Naive thymus-derived CD4-positive, alpha-beta T cell (primary cell): ENCODE measurements at regions of chr15 and their contacts with region 1.

Region 1: GRCh38 chr15:41695750-41696426 is 35.7 kb downstream of the MGA start:
- DNase-seq: peak in 7 of 9 donors; percentile 22 to 56 (median 44)
- ATAC-seq: peak; percentile 97
- H3K4me3 ChIP-seq: no peak overlapping the region
- H3K4me3 Mint-ChIP-seq: peak overlapping the region; percentile 3 to 69 (median 56)
- H3K27ac ChIP-seq: peak overlapping the region; percentile 42
- H3K27ac Mint-ChIP-seq: peak overlapping the region; percentile 22 to 81 (median 67)
- H3K4me1 ChIP-seq: peaks cover 0 to 10% of the 10 kb centered on the region in 2 donors
- H3K4me1 Mint-ChIP-seq: peaks cover 25 to 74% (median 59%) of the 10 kb centered on the region in 7 donors
- H3K27me3 ChIP-seq: no peaks in the 10 kb centered on the region
- H3K27me3 Mint-ChIP-seq: no peaks in the 10 kb centered on the region

Region 2: GRCh38 chr15:41811432-41812195 is 115.7 kb after region 1 on chr15:
- CTCF ChIA-PET with region 1: interaction called, 5 read pairs
- POLR2A ChIA-PET with region 1: no interaction called
- intact Hi-C with region 1: loop called (anchors 1 kb)
- DNase-seq: peak; percentile 58 to 77 (median 72)
- ATAC-seq: peak; percentile 95
- H3K4me3 ChIP-seq: no peak overlapping the region
- H3K4me3 Mint-ChIP-seq: peak overlapping the region in 1 of 10 donors; percentile 30
- H3K27ac ChIP-seq: no peak overlapping the region
- H3K27ac Mint-ChIP-seq: peak overlapping the region in 1 of 9 donors; percentile 58
- H3K4me1 ChIP-seq: peaks cover 0 to 3% of the 10 kb centered on the region in 2 donors
- H3K4me1 Mint-ChIP-seq: peaks cover 8 to 28% (median 12%) of the 10 kb centered on the region in 7 donors
- H3K27me3 ChIP-seq: no peaks in the 10 kb centered on the region
- H3K27me3 Mint-ChIP-seq: no peaks in the 10 kb centered on the region

Region 3: DNA sequence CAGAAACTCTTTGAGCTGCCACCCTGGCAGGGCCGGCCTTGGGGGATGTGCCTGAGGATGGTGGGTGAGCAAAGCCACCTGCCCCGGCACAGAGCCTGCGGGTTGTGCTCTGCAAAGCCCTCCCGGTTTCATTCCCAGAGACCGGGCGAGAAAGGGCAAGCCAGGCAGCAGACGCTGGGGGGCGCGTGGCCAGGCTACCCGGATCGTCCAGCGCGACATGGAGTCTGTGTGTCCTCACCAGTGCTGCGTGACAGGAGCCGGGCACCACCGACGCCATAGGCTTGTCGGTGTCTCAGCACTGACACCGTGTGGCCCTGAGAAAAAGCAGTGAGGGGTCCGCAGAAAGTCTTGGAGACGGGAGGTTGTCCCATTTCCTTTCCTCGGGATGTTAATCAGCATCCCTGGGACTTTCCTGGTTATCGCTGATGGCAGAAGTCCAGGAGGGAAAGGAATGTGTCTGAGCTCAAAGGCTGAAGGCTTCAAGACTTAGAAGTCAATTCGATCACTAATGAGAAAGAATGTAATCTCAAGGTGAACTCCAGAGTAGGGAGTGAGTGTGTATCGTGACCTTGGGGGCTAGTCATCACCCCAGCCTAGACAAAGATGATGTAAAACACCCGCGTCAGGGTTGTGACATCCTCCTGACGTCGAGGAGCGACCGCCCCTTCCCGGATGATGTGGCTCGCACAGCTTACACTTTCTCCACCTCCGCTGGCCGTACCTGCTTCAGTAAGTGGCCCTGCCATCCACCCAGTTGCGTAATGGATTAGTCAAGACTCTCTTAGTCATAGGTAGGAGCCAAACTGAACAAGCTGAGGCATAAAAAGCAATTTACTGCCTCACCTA is 361.3 kb after region 1 on chr15:
- CTCF ChIA-PET with region 1: no interaction called
- POLR2A ChIA-PET with region 1: no interaction called
- intact Hi-C with region 1: loop called in 1 of 2 experiments (anchors 5 kb)
- DNase-seq: peak; percentile 19 to 56 (median 30)
- ATAC-seq: peak; percentile 81
- H3K4me3 ChIP-seq: peak overlapping the region; percentile 23
- H3K4me3 Mint-ChIP-seq: peak overlapping the region; percentile 39 to 79 (median 60)
- H3K27ac ChIP-seq: no peak overlapping the region
- H3K27ac Mint-ChIP-seq: peak overlapping the region in 4 of 9 donors; percentile 24 to 77 (median 35)
- H3K4me1 ChIP-seq: no peaks in the 10 kb centered on the region
- H3K4me1 Mint-ChIP-seq: peaks cover 3 to 17% (median 10%) of the 10 kb centered on the region in 7 donors
- H3K27me3 ChIP-seq: peaks cover 0 to 12% of the 10 kb centered on the region in 2 donors
- H3K27me3 Mint-ChIP-seq: peaks cover 11 to 59% (median 27%) of the 10 kb centered on the region in 5 donors